ENCODE measurements at regions of chr2 and their contacts with region 1.

Region 1: GRCh38 chr2:6896930-6897759 is 19.6 kb downstream of the RSAD2 start:
- DNase-seq: no peak
- H3K4me3 Mint-ChIP-seq: no peak overlapping the region
- H3K27ac Mint-ChIP-seq: peak overlapping the region; percentile 21
- H3K4me1 Mint-ChIP-seq: peaks cover 13% of the 10 kb centered on the region
- H3K27me3 Mint-ChIP-seq: no peaks in the 10 kb centered on the region

Region 2: DNA sequence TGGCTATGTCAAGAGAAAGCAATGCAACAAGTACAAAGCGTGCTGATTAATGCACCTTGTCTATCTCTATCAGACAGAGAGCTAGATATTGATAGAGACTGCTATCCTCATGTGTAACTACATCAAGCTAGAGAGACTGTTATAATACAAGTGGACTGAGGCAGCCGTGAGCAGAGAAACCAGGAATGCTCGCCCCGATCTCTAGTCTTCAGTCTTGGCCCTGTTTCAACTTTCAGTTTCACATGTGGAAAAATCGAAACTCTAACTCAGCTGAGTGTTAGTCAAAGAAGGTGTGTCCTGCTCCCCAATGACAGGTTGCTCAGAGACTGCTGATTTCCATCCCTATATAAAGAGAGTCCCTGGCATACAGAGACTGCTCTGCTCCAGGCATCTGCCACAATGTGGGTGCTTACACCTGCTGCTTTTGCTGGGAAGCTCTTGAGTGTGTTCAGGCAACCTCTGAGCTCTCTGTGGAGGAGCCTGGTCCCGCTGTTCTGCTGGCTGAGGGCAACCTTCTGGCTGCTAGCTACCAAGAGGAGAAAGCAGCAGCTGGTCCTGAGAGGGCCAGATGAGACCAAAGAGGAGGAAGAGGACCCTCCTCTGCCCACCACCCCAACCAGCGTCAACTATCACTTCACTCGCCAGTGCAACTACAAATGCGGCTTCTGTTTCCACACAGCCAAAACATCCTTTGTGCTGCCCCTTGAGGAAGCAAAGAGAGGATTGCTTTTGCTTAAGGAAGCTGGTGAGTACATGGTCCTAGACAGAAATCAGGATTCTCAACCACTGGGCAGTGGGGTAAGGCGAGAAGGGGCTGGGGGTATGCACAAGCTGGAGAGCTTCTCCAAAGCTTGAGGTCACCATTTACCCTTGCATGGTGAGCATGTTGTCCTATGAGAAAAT is 19.5 kb before region 1 on chr2 and contains the start of gene RSAD2:
- CTCF ChIA-PET with region 1: interaction called, 39 read pairs
- intact Hi-C with region 1: no loop called
- DNase-seq: peak; percentile 45
- H3K4me3 Mint-ChIP-seq: peak within 1 kb of the TSS; percentile 68
- H3K27ac Mint-ChIP-seq: no peak within 1 kb of the TSS
- H3K4me1 Mint-ChIP-seq: peaks cover 66% of the 10 kb centered on the region
- H3K27me3 Mint-ChIP-seq: no peaks in the 10 kb centered on the region
- total RNA-seq, gene RSAD2: 9.1 to 9.9 TPM

Region 3: DNA sequence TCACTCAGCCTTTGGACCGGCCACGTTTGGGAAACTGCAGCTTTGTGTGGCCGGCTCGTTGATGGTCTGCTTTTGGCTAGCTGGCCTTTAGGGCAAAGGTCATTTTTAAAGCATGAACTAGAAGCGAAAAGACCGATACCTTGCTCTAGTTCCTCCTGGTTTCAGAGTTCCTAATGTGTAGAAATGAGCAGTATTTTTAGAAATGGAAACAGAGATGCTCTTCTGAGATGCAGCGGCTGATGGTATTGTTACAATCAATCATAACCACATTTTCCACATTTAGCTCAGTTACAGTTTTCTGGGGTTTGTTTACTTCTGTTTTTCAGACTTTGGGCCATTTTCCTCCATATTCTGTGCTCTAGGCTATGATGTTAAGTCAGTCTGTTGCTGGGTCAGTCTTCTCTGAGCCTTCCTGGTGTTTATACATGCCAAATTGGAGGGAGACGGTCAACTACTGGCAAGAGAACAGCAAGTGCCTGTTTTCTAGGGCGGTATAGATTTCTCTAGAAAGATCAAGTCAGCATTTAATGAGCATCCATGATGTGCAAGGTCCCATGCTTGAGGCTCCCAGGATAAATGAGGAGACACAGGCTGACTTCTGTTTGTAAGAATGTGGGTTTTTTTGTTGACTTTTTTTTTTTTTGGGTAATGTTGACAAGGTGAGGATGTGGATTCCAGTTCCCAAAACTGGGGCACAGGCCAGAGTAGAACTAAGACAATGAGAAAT is 48.1 kb after region 1 on chr2:
- CTCF ChIA-PET with region 1: interaction called, 5 read pairs
- intact Hi-C with region 1: loop called (anchors 5 kb)
- DNase-seq: no peak
- H3K4me3 Mint-ChIP-seq: no peak overlapping the region
- H3K27ac Mint-ChIP-seq: no peak overlapping the region
- H3K4me1 Mint-ChIP-seq: peaks cover 44% of the 10 kb centered on the region
- H3K27me3 Mint-ChIP-seq: no peaks in the 10 kb centered on the region

Region 4: GRCh38 chr2:7014174-7014640 is 117.1 kb after region 1 on chr2:
- CTCF ChIA-PET with region 1: interaction called, 36 read pairs
- intact Hi-C with region 1: loop called (anchors 1 kb)
- DNase-seq: peak; percentile 42
- H3K4me3 Mint-ChIP-seq: no peak overlapping the region
- H3K27ac Mint-ChIP-seq: peak overlapping the region; percentile 44
- H3K4me1 Mint-ChIP-seq: peaks cover 41% of the 10 kb centered on the region
- H3K27me3 Mint-ChIP-seq: no peaks in the 10 kb centered on the region

Measured in activated naive CD4-positive, alpha-beta T cell treated with anti-CD3 and anti-CD28 coated beads for 36 hours (primary cell).